Common myeloid progenitor, CD34-positive (primary cell): ENCODE measurements at regions of chr14 and their contacts with region 1.

Region 1: GRCh38 chr14:89237921-89238529 is 179.0 kb downstream of the FOXN3 start:
- DNase-seq: peak in 2 of 3 donors; percentile 59 to 60
- H3K4me3 ChIP-seq: no peak overlapping the region
- H3K27ac ChIP-seq: no peak overlapping the region
- H3K4me1 ChIP-seq: peaks cover 3 to 43% (median 17%) of the 10 kb centered on the region in 4 experiments
- H3K27me3 ChIP-seq: no peaks in the 10 kb centered on the region

Region 2: DNA sequence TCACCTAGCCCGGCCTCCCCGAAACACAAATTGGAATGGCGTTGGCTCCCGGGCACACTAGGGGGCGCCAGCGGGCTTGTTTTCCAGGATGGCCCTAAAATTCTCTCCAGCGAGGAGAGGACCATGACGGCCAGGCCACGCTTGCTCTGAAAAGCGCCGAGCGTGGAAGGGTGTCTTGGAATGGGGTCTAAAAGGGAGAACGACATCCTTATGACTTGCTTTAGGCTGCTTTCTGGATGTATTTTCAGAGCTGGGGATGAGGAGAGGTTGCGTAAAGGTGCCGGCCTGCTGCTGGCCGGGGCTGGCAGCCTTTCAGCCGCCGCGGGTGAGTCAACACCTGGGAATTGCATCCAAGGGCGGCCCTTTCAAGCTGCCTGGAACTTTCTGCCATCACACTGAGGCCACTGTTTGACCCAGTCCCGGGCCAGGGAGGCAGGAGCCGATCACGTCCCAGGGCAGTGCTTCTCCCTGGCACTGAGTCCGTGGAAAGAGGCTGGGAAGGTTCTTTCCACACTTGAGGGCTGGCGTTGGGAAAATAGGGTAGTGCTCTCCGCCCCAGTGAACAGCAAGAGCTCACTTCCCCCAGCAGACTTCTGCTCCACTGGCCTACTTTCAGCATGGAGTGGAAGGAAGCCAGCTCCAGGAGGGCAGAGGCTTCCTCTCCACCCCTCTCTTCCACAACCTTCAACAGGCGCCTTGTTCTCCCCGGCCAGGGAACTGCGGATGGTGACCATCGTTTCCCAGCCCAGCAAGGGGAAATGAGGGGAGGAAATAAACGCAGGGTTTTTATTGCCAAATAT is 197.4 kb before region 1 on chr14:
- CTCF ChIA-PET with region 1: interaction called, 13 read pairs
- POLR2A ChIA-PET with region 1: no interaction called
- DNase-seq: peak; percentile 76 to 86 (median 84)
- H3K4me3 ChIP-seq: peak overlapping the region in 6 of 7 experiments; percentile 28 to 81 (median 66)
- H3K27ac ChIP-seq: peak overlapping the region; percentile 52 to 63
- H3K4me1 ChIP-seq: peaks cover 6 to 22% (median 11%) of the 10 kb centered on the region in 4 experiments
- H3K27me3 ChIP-seq: no peaks in the 10 kb centered on the region

Region 3: DNA sequence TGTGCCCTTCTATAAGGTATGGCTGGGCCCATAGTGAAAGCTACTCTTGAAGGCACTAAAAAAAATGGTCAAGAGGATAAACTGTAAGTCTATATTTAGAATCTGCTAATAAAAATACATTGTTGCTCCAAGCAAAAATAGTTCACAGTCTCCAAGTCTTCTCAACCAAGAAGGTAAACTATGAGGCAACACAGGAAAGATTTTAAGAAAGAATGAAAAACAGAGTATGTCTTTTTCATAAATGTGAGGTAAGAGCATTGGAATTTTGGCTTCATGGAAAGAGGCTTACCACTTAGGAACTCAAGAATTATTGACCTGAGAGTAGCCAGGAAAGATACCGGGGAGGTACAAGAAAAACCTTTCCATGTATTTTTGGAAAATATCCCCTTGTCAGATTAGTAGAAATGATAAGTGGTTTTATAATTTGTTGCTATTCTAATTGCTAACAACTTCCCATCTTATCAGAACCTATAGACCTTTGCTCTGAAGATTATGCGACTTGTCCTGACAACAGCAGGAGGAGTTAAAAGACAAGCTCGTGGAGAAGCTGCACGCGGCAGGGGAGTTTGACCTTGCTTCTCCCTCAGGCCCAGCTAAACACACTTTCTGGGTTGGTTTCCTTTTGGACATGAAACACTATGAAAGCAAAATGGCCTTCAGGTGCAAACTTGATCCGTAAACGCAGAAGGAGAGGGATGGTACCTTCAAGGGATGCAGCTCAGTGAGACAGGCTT is 59.1 kb before region 1 on chr14:
- CTCF ChIA-PET with region 1: interaction called, 31 read pairs
- POLR2A ChIA-PET with region 1: no interaction called
- DNase-seq: no peak
- H3K4me3 ChIP-seq: no peak overlapping the region
- H3K27ac ChIP-seq: no peak overlapping the region
- H3K4me1 ChIP-seq: peaks cover 0 to 11% (median 5%) of the 10 kb centered on the region in 4 experiments
- H3K27me3 ChIP-seq: no peaks in the 10 kb centered on the region

Region 4: GRCh38 chr14:89214221-89214936 is 23.6 kb before region 1 on chr14:
- CTCF ChIA-PET with region 1: interaction called, 10 read pairs
- POLR2A ChIA-PET with region 1: no interaction called
- DNase-seq: peak in 2 of 3 donors; percentile 40 to 52
- H3K4me3 ChIP-seq: peak overlapping the region in 1 of 7 experiments; percentile 10
- H3K27ac ChIP-seq: peak overlapping the region in 1 of 2 experiments; percentile 43
- H3K4me1 ChIP-seq: peaks cover 2 to 48% (median 17%) of the 10 kb centered on the region in 4 experiments
- H3K27me3 ChIP-seq: no peaks in the 10 kb centered on the region

Region 5: DNA sequence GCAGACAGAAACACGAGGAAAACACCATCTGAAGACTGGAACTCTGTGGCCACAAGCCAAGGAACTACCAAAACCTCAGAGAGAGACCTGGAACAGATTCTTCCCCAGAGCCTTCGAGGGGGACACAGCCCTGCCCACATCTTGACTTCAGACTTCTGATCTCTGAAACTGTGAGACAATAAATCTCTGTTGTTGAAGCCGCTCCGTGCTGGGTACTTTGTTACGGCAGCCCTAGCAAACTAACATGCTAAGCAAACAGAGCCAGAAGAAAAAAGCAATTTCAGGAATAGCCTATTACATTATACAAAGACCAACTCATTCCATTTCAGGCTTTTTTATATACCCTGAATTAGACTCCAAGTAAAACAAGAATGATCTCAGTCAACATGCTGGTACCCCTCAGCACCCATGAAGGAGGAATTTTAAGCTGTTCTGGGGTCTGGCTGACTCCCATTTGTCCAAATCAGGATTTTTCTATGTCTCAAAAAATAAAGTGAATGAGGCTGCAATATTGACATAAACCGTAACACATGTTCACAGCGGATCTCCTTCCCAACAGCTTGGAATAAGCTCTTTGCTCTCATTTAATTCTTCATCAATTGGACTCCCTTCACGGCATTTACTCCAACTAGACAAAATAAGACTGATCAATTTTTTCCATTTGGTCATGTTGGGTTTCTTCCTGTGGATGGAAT is 11.1 kb before region 1 on chr14:
- CTCF ChIA-PET with region 1: interaction called, 14 read pairs
- POLR2A ChIA-PET with region 1: no interaction called
- DNase-seq: no peak
- H3K4me3 ChIP-seq: no peak overlapping the region
- H3K27ac ChIP-seq: no peak overlapping the region
- H3K4me1 ChIP-seq: peaks cover 0 to 8% (median 4%) of the 10 kb centered on the region in 4 experiments
- H3K27me3 ChIP-seq: no peaks in the 10 kb centered on the region

Region 6: DNA sequence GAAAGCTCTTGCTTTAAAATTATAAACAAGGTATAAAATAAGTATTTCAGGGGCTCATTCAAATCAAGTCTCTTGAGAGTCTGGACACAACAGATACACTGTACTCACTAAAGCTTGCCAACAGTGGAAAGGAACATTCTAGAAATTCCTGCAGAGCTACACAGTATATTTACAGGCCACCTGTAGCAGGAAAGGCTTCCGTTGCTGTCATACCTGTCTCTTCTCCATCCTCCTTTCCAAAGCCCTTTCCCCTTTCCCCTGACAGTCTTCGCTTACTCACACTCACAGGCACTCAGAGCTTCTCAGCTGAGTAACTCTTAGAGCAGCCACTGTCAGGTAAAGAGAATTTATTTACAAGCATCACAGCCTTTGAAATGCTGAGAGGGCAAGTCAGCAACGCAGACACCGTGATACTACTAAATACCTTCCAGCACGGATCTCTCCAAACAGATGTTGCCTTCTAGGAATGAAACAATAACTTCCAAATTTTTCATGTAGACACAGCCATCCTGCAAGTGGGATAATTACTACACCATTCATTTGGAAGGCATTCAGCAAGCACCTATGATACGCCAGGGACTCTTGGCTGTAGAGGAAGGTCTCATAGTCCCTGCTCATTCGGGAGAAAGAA is 11.2 kb after region 1 on chr14:
- CTCF ChIA-PET with region 1: interaction called, 15 read pairs
- POLR2A ChIA-PET with region 1: no interaction called
- DNase-seq: no peak
- H3K4me3 ChIP-seq: no peak overlapping the region
- H3K27ac ChIP-seq: no peak overlapping the region
- H3K4me1 ChIP-seq: no peaks in the 10 kb centered on the region
- H3K27me3 ChIP-seq: no peaks in the 10 kb centered on the region

Region 7: DNA sequence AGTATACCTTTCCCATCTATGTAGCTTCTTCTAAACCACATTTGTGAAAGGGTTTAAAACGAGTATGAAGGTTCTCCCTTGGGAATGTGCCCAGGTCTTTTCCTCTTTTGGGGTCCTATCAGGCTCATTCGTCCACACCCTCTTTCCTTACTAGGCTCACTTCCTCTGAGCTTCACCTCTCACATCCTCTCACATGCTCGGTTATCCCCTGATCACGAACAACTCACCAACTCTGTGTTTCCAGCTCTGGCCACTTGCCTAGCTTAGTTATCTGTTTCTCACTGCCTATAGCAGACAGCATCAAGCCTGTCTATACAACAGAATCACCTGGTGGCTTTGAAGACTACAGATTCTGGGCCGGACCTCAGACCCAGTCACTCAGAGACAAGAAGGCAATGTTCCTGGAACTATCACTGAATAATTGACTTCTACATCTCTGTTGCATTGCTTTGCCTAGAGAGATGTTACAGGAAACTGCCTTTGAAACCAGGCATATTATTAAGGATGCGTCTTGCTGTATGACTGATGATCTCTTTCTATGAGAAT is 20.8 kb after region 1 on chr14:
- CTCF ChIA-PET with region 1: interaction called, 21 read pairs
- POLR2A ChIA-PET with region 1: no interaction called
- DNase-seq: no peak
- H3K4me3 ChIP-seq: no peak overlapping the region
- H3K27ac ChIP-seq: no peak overlapping the region
- H3K4me1 ChIP-seq: no peaks in the 10 kb centered on the region
- H3K27me3 ChIP-seq: no peaks in the 10 kb centered on the region